GM10248 (cell line): ENCODE measurements at regions of chr17 and their contacts with region 1.

Region 1: DNA sequence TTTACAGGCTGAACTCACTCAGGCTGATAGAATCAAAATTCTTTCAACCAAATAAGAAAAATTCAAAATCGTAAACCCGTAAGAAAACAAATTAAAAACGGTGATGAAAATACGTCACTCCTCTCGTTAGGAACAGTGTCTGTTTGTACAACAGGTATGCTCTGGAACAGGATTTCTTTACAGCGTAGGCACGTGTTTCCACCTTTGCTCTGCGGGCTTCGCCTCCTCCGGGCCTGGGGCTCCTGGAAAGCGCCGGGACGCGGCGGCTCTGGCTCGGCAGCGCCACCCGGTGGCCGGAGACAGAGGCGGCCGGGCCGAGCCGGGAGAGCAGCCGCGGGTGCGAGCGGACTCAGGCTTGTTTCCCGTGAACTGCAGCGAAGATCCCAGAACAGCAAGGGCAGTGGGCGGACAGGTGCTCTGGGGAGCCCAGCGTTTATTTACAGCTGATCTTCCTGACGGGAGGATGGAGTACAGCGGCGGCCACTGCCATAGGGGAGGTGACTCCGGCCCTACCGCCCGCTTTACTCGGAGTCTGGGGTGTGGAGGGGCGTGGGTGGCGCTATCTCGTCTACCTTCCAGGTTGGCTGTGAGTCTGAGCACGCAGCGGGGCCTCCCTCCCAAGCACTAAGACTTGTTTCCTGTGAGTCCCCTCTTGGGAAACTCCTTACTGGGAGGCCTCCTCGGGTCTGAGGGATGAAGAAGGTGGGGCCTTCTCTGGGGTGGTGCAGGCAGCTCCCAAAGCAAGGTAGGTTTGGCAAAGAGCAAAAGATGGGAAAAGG is 40.5 kb upstream of the ATP2A3 start:
- DNase-seq: peak; percentile 88
- CTCF ChIP-seq: peak; percentile 91

Region 2: DNA sequence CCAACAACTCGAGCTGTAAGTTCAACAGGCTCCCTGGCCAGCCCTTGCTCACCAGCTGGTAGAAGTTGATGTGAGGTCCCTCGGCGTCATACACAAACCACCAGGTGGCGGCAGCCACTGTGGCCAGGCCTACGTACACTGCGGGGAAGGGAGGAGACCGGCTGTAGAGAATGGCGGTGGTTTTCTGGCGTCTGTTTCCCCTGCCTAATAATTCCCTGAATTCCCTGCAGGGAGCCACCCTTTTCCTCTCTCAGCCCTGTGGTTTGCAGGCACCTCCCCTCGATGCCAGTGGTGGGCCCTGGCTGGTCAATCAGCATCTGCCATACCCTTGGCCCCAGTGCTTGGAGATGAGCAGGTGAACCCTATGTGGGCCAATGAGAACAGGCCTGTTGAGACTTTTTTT is 69.6 kb before region 1 on chr17:
- CTCF ChIA-PET with region 1: interaction called, 12 read pairs
- POLR2A ChIA-PET with region 1: no interaction called
- DNase-seq: peak; percentile 68
- CTCF ChIP-seq: peak; percentile 61

Region 3: GRCh38 chr17:3965118-3965803 is 39.4 kb before region 1 on chr17:
- CTCF ChIA-PET with region 1: interaction called, 13 read pairs
- POLR2A ChIA-PET with region 1: interaction called, 3 read pairs
- DNase-seq: peak; percentile 86
- CTCF ChIP-seq: peak; percentile 26

Region 4: DNA sequence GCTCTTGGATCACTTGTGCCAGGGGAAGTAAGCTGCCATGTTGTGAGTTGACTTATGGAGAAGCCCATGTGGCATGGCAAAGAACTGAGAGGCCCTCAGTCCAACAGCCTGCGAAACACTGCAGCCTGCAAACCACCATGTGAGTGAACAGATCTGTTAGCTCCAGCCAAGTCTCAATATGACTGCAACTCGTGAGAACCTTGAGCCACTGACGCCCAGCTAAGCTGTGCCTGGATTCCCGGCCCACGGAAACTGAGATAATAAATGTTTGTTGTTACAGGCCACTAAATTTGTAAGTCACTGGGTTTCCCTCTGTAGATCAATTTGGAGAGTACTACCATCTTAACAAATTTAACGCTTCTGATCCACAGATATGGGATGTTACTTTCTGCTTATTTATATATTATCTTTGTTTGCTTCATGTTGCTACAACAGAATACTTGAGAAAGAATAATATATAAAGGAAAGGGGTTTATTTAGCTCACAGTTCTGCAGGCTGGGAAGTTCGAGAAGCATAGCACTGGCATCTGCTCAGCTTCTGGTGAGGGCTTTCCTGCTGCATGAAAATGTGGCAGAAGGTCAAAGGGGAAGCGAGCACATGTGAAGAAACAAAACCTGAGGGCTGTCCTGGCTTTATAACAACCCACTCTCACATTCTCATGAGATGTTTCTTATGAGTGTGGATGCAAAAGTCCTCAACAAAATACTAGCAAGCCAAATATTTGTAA is 11.0 kb before region 1 on chr17:
- CTCF ChIA-PET with region 1: interaction called, 10 read pairs
- POLR2A ChIA-PET with region 1: no interaction called
- DNase-seq: peak; percentile 56
- CTCF ChIP-seq: no peak

Region 5: GRCh38 chr17:4017377-4017776 is 12.7 kb after region 1 on chr17:
- CTCF ChIA-PET with region 1: interaction called, 21 read pairs
- POLR2A ChIA-PET with region 1: no interaction called
- DNase-seq: no peak
- CTCF ChIP-seq: peak; percentile 20

Region 6: GRCh38 chr17:4023220-4023619 is 18.5 kb after region 1 on chr17:
- CTCF ChIA-PET with region 1: interaction called, 26 read pairs
- POLR2A ChIA-PET with region 1: no interaction called
- DNase-seq: no peak
- CTCF ChIP-seq: no peak

Region 7: DNA sequence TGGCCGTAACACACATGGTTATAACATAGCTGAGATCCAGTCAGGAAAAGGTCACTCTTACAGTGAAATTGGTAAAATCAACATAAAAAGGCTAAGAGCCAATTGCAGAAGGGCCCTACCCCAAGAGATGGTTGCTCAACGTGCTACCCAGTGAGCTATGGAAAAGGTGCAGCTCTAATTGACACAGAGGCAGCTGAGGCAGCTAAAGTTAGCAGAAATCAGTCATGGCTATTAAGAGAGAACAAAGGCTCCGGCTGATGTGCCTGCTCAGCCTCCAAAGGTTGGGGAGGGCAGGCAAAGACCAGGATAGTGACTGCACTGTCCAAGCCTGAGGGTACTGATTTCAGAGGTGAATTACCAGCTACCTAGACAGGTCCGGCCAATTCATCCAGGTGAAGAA is 36.1 kb after region 1 on chr17:
- CTCF ChIA-PET with region 1: no interaction called
- POLR2A ChIA-PET with region 1: no interaction called
- DNase-seq: no peak
- CTCF ChIP-seq: no peak